CD4-positive, alpha-beta memory T cell (primary cell): ENCODE measurements at regions of chr1 and their contacts with region 1.

Region 1: GRCh38 chr1:167066333-167067122 is 23.6 kb downstream of the GPA33 start:
- DNase-seq: peak; percentile 66 to 79 (median 72)
- H3K4me3 ChIP-seq: no peak overlapping the region
- H3K4me3 Mint-ChIP-seq: peak overlapping the region in 2 of 8 donors; percentile 51 to 58
- H3K27ac ChIP-seq: no peak overlapping the region
- H3K27ac Mint-ChIP-seq: peak overlapping the region in 1 of 7 donors; percentile 85
- H3K4me1 ChIP-seq: no peaks in the 10 kb centered on the region
- H3K4me1 Mint-ChIP-seq: peaks cover 0 to 2% (median under 1%) of the 10 kb centered on the region in 4 donors
- H3K27me3 ChIP-seq: no peaks in the 10 kb centered on the region
- H3K27me3 Mint-ChIP-seq: no peaks in the 10 kb centered on the region

Region 2: DNA sequence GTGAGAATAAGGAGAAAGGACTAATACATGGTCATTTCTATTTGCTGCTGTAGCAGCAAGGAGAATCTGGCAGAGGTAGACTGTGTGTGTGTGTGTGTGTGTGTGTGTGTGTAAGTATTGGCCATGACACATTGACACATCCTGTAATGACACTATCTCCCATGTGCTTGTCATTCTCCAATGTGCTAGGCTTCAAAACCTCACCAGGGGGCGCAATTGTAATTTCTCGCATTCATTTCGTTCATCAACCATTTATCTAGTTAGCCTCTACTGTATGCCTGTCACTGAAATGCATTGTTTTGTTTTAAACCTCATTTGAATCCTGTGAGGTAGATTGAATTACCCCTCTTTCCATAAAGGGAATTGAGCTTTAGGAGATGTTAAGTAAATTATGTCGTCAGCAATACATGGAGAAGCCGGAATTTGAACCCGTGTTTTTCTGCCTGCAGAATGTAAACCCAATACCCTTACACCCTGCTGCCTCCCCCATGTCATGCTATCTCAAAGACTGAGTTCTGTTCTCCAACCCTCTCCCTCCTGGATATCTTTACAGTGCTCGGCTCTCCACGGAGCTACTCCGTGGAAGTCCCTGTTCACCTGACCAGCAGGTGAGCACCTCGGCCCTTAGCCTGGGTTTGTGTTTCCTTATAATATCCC is 1138.3 kb before region 1 on chr1:
- CTCF ChIA-PET with region 1: no interaction called
- POLR2A ChIA-PET with region 1: no interaction called
- intact Hi-C with region 1: loop called (anchors 10 kb)
- DNase-seq: peak in 4 of 5 donors; percentile 45 to 55 (median 48)
- H3K4me3 ChIP-seq: no peak overlapping the region
- H3K4me3 Mint-ChIP-seq: no peak overlapping the region
- H3K27ac ChIP-seq: no peak overlapping the region
- H3K27ac Mint-ChIP-seq: peak overlapping the region in 1 of 7 donors; percentile 10
- H3K4me1 ChIP-seq: no peaks in the 10 kb centered on the region
- H3K4me1 Mint-ChIP-seq: peaks cover 0 to 2% (median 0%) of the 10 kb centered on the region in 4 donors
- H3K27me3 ChIP-seq: no peaks in the 10 kb centered on the region
- H3K27me3 Mint-ChIP-seq: peaks cover 10 to 17% of the 10 kb centered on the region in 2 donors

Region 3: DNA sequence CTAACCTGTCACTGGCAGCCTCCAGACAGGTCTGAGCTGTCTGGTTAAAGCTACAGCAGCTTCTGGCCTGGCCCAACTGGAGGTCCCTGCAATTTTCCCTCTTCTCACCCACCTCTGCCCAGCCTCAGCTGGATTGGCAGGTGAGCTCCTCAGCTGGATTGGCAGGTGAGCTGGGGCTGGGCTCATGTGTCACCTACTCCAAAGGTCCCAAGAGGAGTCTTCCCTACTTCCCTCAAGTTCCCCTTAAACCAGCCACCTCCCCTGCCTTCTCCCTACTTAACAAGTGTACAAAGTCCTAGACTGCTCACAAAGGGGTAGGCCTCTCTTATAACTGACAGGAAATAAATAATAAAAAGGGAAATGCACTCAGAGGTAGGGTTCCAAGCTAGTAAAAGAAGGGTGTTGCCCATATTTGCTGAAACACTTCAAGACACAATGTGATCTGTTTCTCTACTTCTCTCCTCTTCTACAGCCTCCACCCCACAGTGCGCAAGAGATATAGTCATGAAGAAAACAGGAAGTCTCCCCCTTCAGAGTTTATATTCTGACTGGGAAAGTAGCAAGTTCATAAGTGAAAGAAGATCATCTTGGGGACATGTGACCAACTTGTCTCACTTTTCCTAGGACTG is 23.9 kb after region 1 on chr1 and contains the start of gene GPA33:
- CTCF ChIA-PET with region 1: interaction called, 12 read pairs
- POLR2A ChIA-PET with region 1: no interaction called
- intact Hi-C with region 1: loop called (anchors 2 kb)
- DNase-seq: peak in 4 of 5 donors; percentile 60 to 70 (median 64)
- H3K4me3 ChIP-seq: peak within 1 kb of the TSS; percentile 2 to 44
- H3K4me3 Mint-ChIP-seq: peak within 1 kb of the TSS; percentile 73 to 88 (median 81)
- H3K27ac ChIP-seq: peak within 1 kb of the TSS; percentile 51
- H3K27ac Mint-ChIP-seq: peak within 1 kb of the TSS; percentile 89 to 98 (median 95)
- H3K4me1 ChIP-seq: peaks cover 42% of the 10 kb centered on the region
- H3K4me1 Mint-ChIP-seq: peaks cover 17 to 45% (median 34%) of the 10 kb centered on the region in 4 donors
- H3K27me3 ChIP-seq: no peaks in the 10 kb centered on the region
- H3K27me3 Mint-ChIP-seq: peaks cover 0 to 2% of the 10 kb centered on the region in 2 donors
- total RNA-seq, gene GPA33: 21.2 to 21.6 TPM

Region 4: GRCh38 chr1:167128261-167129227 is 62.0 kb after region 1 on chr1:
- CTCF ChIA-PET with region 1: interaction called, 183 read pairs
- POLR2A ChIA-PET with region 1: no interaction called
- intact Hi-C with region 1: loop called (anchors 1 kb)
- DNase-seq: peak in 2 of 5 donors; percentile 8 to 16
- H3K4me3 ChIP-seq: no peak overlapping the region
- H3K4me3 Mint-ChIP-seq: no peak overlapping the region
- H3K27ac ChIP-seq: no peak overlapping the region
- H3K27ac Mint-ChIP-seq: peak overlapping the region in 1 of 7 donors; percentile 72
- H3K4me1 ChIP-seq: no peaks in the 10 kb centered on the region
- H3K4me1 Mint-ChIP-seq: no peaks in the 10 kb centered on the region
- H3K27me3 ChIP-seq: no peaks in the 10 kb centered on the region
- H3K27me3 Mint-ChIP-seq: peaks cover 16 to 35% of the 10 kb centered on the region in 2 donors

Region 5: DNA sequence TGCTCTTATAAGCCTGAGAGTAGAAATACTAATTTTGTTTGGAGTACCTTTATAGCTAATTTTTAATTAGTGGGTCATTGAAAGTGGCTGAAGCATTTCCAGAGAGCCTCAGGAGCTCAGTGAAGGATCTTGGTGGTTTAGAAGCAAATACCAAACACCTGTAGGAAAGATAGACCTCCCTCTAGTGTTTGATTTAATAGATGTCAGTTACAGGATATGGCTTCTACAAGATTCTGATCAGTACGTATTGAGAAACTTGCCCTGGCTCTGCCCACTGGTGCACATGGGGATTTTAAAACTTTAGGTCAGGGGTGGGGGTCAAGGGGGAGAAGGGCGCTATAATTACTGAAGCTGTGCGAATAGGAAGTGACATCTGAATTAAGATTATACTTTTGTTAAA is 276.3 kb after region 1 on chr1:
- CTCF ChIA-PET with region 1: no interaction called
- POLR2A ChIA-PET with region 1: no interaction called
- intact Hi-C with region 1: loop called (anchors 5 kb)
- DNase-seq: peak in 3 of 5 donors; percentile 1 to 14 (median 4)
- H3K4me3 ChIP-seq: no peak overlapping the region
- H3K4me3 Mint-ChIP-seq: no peak overlapping the region
- H3K27ac ChIP-seq: no peak overlapping the region
- H3K27ac Mint-ChIP-seq: peak overlapping the region in 2 of 7 donors; percentile 25 to 26
- H3K4me1 ChIP-seq: no peaks in the 10 kb centered on the region
- H3K4me1 Mint-ChIP-seq: peaks cover 4 to 11% (median 5%) of the 10 kb centered on the region in 4 donors
- H3K27me3 ChIP-seq: no peaks in the 10 kb centered on the region
- H3K27me3 Mint-ChIP-seq: no peaks in the 10 kb centered on the region

Region 6: GRCh38 chr1:167442124-167442848 is 375.8 kb after region 1 on chr1:
- CTCF ChIA-PET with region 1: no interaction called
- POLR2A ChIA-PET with region 1: no interaction called
- intact Hi-C with region 1: loop called (anchors 1 kb)
- DNase-seq: peak; percentile 82 to 89 (median 85)
- H3K4me3 ChIP-seq: no peak overlapping the region
- H3K4me3 Mint-ChIP-seq: peak overlapping the region in 5 of 8 donors; percentile 26 to 61 (median 54)
- H3K27ac ChIP-seq: peak overlapping the region; percentile 17
- H3K27ac Mint-ChIP-seq: peak overlapping the region; percentile 75 to 94 (median 88)
- H3K4me1 ChIP-seq: peaks cover 82% of the 10 kb centered on the region
- H3K4me1 Mint-ChIP-seq: peaks cover 61 to 94% (median 76%) of the 10 kb centered on the region in 4 donors
- H3K27me3 ChIP-seq: no peaks in the 10 kb centered on the region
- H3K27me3 Mint-ChIP-seq: no peaks in the 10 kb centered on the region